ENCODE measurements at regions of chr6 and their contacts with region 1.

Region 1: GRCh38 chr6:53725791-53726431 is 60.4 kb upstream of the KLHL31 start:
- DNase-seq: peak; percentile 86
- ATAC-seq: peak; percentile 91
- H3K4me3 Mint-ChIP-seq: no peak overlapping the region
- H3K27ac Mint-ChIP-seq: no peak overlapping the region
- H3K4me1 Mint-ChIP-seq: peaks cover 5% of the 10 kb centered on the region
- H3K27me3 Mint-ChIP-seq: peaks cover 12% of the 10 kb centered on the region

Region 2: GRCh38 chr6:53651764-53652401 is 74.0 kb before region 1 on chr6:
- CTCF ChIA-PET with region 1: interaction called, 20 read pairs
- POLR2A ChIA-PET with region 1: no interaction called
- intact Hi-C with region 1: loop called (anchors 1 to 5 kb)
- DNase-seq: peak; percentile 87
- ATAC-seq: peak; percentile 95
- H3K4me3 Mint-ChIP-seq: peak overlapping the region; percentile 81
- H3K27ac Mint-ChIP-seq: peak overlapping the region; percentile 82
- H3K4me1 Mint-ChIP-seq: peaks cover 28% of the 10 kb centered on the region
- H3K27me3 Mint-ChIP-seq: no peaks in the 10 kb centered on the region

Region 3: DNA sequence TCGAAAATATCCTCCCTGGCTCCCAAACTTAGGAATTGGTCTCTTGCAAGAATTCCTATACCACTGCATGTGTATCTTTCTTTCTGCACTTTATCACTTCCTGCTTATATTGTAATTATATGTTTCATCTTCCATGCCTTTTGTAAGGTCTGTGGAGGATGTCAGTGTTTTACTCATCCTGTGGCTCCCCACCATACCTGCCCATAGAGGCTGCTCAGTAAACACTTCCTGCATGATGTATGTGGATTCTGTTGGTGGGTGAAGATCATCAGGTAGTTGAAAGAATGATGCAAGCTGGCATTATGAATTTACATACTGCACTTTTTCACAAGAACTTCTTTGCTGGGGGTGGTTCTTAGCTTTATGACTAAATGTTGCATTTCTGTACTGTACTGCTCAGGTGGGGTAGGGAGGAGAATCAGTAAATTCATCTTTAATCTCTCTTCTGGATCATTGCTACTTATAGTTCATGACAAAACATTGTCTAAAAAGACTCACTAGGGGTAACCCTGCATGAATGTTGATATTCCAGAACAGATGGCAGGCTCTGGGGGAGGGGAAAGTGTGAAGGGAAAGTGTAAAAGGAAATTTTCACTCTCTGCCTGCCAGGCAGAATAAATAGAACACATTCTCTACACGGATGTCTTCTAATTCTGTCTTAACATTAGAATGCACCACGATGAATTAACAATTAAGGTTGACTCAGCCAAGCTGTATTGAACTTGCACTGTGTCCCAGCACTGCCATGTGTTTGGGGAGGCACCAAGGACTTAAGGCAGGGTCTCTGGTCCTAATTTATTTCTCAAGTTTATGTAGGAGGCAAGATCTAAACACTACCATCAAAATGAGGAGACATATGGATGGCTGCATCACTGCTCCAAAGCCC is 24.3 kb before region 1 on chr6:
- CTCF ChIA-PET with region 1: interaction called, 14 read pairs
- POLR2A ChIA-PET with region 1: no interaction called
- intact Hi-C with region 1: loop called in 1 of 2 experiments (anchors 2 kb)
- DNase-seq: peak; percentile 44
- ATAC-seq: peak; percentile 98
- H3K4me3 Mint-ChIP-seq: no peak overlapping the region
- H3K27ac Mint-ChIP-seq: peak overlapping the region; percentile 80
- H3K4me1 Mint-ChIP-seq: peaks cover 11% of the 10 kb centered on the region
- H3K27me3 Mint-ChIP-seq: no peaks in the 10 kb centered on the region

Region 4: DNA sequence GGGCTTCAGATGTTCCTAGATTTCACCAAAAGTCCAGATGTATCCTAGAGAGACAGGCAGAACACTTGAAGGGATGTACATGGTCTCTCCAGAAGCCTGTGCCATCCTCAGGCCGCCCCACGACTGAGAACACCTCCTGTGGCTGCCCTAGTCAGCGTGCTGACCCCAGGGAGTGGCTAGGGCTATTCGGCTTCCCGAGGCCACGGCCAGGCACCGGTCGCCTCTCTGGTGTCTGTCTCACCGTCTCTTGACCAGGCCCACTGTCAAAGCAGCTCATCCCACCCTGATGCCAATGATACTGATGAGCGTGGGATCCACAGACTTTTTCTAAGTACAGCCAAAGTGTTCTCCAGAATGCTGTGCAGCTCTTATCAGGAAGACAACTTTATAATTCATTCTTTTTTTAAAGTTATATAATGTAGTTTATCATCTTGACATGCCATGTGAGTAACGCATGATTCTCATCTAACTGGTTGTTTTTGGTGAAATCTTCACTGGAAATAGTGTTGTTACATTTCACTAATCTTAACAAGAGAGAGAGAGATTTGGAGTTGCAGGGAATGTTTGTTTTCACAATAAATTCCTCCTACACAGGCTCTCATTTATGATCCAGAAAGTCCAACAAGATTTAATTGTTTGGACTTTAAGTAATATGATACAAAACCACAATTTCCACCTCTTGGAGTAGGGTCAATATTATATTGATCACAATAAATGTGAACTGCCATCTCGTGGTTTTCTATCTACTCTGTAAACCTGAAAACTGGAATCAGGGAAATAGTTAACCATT is 18.6 kb before region 1 on chr6:
- CTCF ChIA-PET with region 1: interaction called, 50 read pairs
- POLR2A ChIA-PET with region 1: no interaction called
- intact Hi-C with region 1: loop called in 1 of 2 experiments (anchors 2 kb)
- DNase-seq: no peak
- ATAC-seq: no peak
- H3K4me3 Mint-ChIP-seq: no peak overlapping the region
- H3K27ac Mint-ChIP-seq: no peak overlapping the region
- H3K4me1 Mint-ChIP-seq: no peaks in the 10 kb centered on the region
- H3K27me3 Mint-ChIP-seq: peaks cover 2% of the 10 kb centered on the region

Region 5: GRCh38 chr6:53926525-53926924 is 200.6 kb after region 1 on chr6:
- CTCF ChIA-PET with region 1: no interaction called
- POLR2A ChIA-PET with region 1: no interaction called
- intact Hi-C with region 1: no loop called
- DNase-seq: no peak
- ATAC-seq: no peak
- H3K4me3 Mint-ChIP-seq: no peak overlapping the region
- H3K27ac Mint-ChIP-seq: no peak overlapping the region
- H3K4me1 Mint-ChIP-seq: no peaks in the 10 kb centered on the region
- H3K27me3 Mint-ChIP-seq: no peaks in the 10 kb centered on the region

Region 6: GRCh38 chr6:53956068-53956711 is 230.3 kb after region 1 on chr6:
- CTCF ChIA-PET with region 1: interaction called, 10 read pairs
- POLR2A ChIA-PET with region 1: no interaction called
- intact Hi-C with region 1: loop called (anchors 1 to 5 kb)
- DNase-seq: peak; percentile 64
- ATAC-seq: peak; percentile 72
- H3K4me3 Mint-ChIP-seq: no peak overlapping the region
- H3K27ac Mint-ChIP-seq: no peak overlapping the region
- H3K4me1 Mint-ChIP-seq: no peaks in the 10 kb centered on the region
- H3K27me3 Mint-ChIP-seq: no peaks in the 10 kb centered on the region

Measured in activated CD4-positive, alpha-beta T cell treated with anti-CD3 and anti-CD28 coated beads for 36 hours (primary cell).